Transverse colon (tissue), 4 donors: ENCODE measurements at regions of chr3 and their contacts with region 1.

Region 1: GRCh38 chr3:46609944-46610722 is 2.2 kb upstream of the FAM240A start:
- DNase-seq: no peak
- H3K4me3 ChIP-seq: no peak overlapping the region
- H3K27ac ChIP-seq: no peak overlapping the region
- H3K4me1 ChIP-seq: no peaks in the 10 kb centered on the region
- H3K27me3 ChIP-seq: no peaks in the 10 kb centered on the region
- CTCF ChIP-seq: no peak
- EP300 ChIP-seq: no peak
- POLR2A ChIP-seq: no peak

Region 2: DNA sequence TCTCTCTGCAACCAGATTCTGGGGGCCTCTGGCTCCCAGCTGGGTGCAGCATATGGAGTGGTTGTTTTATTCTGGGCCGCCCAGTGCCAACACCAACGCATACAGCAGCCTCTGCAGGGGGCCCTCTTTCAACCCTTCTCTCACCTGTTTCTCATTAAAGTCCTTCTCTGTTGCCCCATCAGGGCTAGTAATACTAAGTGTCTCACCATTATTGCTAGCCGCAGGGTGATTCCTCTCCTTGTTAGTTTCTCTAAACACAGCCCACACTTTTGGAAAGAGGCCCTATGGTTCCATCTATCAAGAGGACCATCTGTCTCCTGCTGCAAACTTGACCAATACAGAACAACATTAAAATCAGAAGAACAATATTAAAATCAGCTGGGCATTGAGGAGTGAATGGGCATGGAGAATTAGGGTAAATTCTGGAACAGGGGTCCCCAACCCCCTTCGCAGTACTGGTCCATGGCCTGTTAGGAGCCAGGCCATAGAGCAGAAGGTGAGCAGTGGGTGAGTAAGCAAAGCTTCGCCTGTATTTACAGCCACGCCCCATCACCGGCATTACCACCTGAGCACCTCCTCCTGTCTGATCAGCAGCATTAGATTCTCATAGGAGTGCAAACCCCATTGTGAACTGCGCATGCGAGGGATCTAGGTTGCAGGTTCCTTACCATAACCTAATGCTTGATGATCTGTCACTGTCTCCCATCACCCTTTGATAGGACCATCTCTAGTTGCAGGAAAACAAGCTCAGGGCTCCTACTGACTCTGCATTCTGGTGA is 46.8 kb after region 1 on chr3:
- in situ Hi-C with region 1: no loop called
- intact Hi-C with region 1: loop called (anchors 1 kb)
- DNase-seq: no peak
- H3K4me3 ChIP-seq: no peak overlapping the region
- H3K27ac ChIP-seq: no peak overlapping the region
- H3K4me1 ChIP-seq: no peaks in the 10 kb centered on the region
- H3K27me3 ChIP-seq: no peaks in the 10 kb centered on the region
- CTCF ChIP-seq: no peak
- EP300 ChIP-seq: no peak
- POLR2A ChIP-seq: no peak